Activated CD4-positive, alpha-beta memory T cell treated with anti-CD3 and anti-CD28 coated beads for 36 hours (primary cell): ENCODE measurements at regions of chr3 and their contacts with region 1.

Region 1: GRCh38 chr3:18444595-18445400 is 19.7 kb upstream of the SATB1 start:
- DNase-seq: peak; percentile 87
- H3K4me3 Mint-ChIP-seq: peak overlapping the region; percentile 99
- H3K27ac Mint-ChIP-seq: peak overlapping the region; percentile 99
- H3K4me1 Mint-ChIP-seq: peaks cover 36% of the 10 kb centered on the region
- H3K27me3 Mint-ChIP-seq: no peaks in the 10 kb centered on the region

Region 2: GRCh38 chr3:17742108-17742879 is 702.5 kb before region 1 on chr3 and contains the start of gene TBC1D5:
- CTCF ChIA-PET with region 1: no interaction called
- POLR2A ChIA-PET with region 1: no interaction called
- intact Hi-C with region 1: loop called (anchors 5 kb)
- DNase-seq: peak; percentile 96
- H3K4me3 Mint-ChIP-seq: peak within 1 kb of the TSS; percentile 94
- H3K27ac Mint-ChIP-seq: peak within 1 kb of the TSS; percentile 97
- H3K4me1 Mint-ChIP-seq: peaks cover 36% of the 10 kb centered on the region
- H3K27me3 Mint-ChIP-seq: no peaks in the 10 kb centered on the region
- total RNA-seq, gene TBC1D5: 49.2 to 53.7 TPM

Region 3: DNA sequence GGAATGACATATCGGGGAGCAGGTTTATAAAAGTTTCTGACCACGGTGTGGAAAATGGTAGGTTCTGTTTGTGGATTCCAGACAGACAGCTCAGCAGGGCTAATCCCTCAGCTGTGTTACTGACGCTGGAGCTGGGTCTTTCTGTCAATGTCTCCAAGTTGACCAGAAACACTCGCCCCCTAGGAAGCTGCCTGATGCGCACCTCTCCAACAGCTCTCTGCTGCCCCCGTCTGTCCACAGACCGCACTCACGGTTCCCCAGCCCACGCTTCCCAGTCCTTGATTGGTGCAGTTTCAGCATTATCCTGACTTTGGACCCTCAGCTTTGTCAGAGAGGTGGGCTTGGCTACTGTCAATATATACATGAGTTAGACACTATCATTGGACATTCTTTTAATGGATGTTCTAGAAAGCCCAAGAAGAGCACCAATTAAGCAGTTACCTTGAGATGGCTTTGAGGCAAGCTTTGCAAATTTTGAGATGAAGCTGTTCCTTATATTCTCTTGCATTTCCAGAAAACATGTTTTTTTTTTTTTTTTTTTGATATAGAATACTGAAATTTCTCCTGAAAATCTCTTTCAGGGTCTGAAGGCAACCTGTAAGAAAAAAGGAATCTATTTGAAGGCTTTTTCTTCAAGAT is 603.5 kb before region 1 on chr3:
- CTCF ChIA-PET with region 1: no interaction called
- POLR2A ChIA-PET with region 1: no interaction called
- intact Hi-C with region 1: no loop called
- DNase-seq: peak; percentile 82
- H3K4me3 Mint-ChIP-seq: no peak overlapping the region
- H3K27ac Mint-ChIP-seq: no peak overlapping the region
- H3K4me1 Mint-ChIP-seq: no peaks in the 10 kb centered on the region
- H3K27me3 Mint-ChIP-seq: peaks cover 4% of the 10 kb centered on the region

Region 4: DNA sequence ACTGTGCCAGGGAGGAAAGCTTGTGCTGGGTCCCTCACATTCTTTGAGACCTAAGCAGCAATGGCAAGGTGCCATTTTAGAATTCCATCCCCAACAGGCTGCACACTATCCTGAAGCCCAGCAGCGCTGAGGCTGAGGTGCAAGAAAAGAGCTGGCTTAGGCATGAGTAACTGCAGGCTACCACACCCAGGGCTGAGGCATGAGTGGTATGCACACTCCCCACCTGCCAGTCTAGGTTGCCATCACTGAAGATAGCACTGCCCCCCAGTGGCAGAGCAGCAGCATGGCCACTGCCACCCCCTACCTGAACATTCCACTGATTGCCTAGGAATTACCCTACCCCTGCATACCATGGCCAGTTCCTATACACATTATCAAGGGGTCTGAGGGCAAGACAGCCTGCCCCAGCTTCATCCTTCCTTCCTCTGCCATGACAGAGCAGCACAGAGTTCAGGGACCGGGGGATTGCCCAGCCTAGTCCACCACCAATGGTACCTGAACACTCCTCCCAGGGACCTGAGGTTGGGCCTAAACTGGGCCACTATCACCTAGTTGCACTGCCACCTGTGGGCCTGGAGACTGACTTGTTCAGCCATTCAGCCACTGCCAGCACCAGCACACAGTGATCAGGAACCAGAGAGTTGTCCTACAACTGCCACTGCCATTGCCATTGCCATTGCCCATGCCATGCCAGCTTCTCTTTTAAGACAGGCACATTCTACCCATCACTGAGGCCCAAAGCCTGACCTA is 149.5 kb before region 1 on chr3:
- CTCF ChIA-PET with region 1: no interaction called
- POLR2A ChIA-PET with region 1: no interaction called
- intact Hi-C with region 1: no loop called
- DNase-seq: peak; percentile 53
- H3K4me3 Mint-ChIP-seq: no peak overlapping the region
- H3K27ac Mint-ChIP-seq: no peak overlapping the region
- H3K4me1 Mint-ChIP-seq: no peaks in the 10 kb centered on the region
- H3K27me3 Mint-ChIP-seq: peaks cover 2% of the 10 kb centered on the region

Region 5: GRCh38 chr3:18389108-18389733 is 55.6 kb before region 1 on chr3:
- CTCF ChIA-PET with region 1: no interaction called
- POLR2A ChIA-PET with region 1: no interaction called
- intact Hi-C with region 1: loop called (anchors 2 kb)
- DNase-seq: no peak
- H3K4me3 Mint-ChIP-seq: no peak overlapping the region
- H3K27ac Mint-ChIP-seq: peak overlapping the region; percentile 28
- H3K4me1 Mint-ChIP-seq: peaks cover 57% of the 10 kb centered on the region
- H3K27me3 Mint-ChIP-seq: no peaks in the 10 kb centered on the region

Region 6: GRCh38 chr3:18424729-18425640 is 19.8 kb before region 1 on chr3 and contains the start of gene SATB1:
- CTCF ChIA-PET with region 1: no interaction called
- POLR2A ChIA-PET with region 1: interaction called, 95 read pairs
- intact Hi-C with region 1: loop called (anchors 1 kb)
- DNase-seq: peak; percentile 78
- H3K4me3 Mint-ChIP-seq: peak within 1 kb of the TSS; percentile 86
- H3K27ac Mint-ChIP-seq: peak within 1 kb of the TSS; percentile 84
- H3K4me1 Mint-ChIP-seq: peaks cover 74% of the 10 kb centered on the region
- H3K27me3 Mint-ChIP-seq: no peaks in the 10 kb centered on the region
- total RNA-seq, gene SATB1: 546 to 561 TPM

Region 7: GRCh38 chr3:18649666-18650363 is 205.0 kb after region 1 on chr3:
- CTCF ChIA-PET with region 1: interaction called, 3 read pairs
- POLR2A ChIA-PET with region 1: interaction called, 16 read pairs
- intact Hi-C with region 1: loop called (anchors 2 kb)
- DNase-seq: peak; percentile 76
- H3K4me3 Mint-ChIP-seq: peak overlapping the region; percentile 30
- H3K27ac Mint-ChIP-seq: peak overlapping the region; percentile 98
- H3K4me1 Mint-ChIP-seq: peaks cover 89% of the 10 kb centered on the region
- H3K27me3 Mint-ChIP-seq: no peaks in the 10 kb centered on the region

Region 8: DNA sequence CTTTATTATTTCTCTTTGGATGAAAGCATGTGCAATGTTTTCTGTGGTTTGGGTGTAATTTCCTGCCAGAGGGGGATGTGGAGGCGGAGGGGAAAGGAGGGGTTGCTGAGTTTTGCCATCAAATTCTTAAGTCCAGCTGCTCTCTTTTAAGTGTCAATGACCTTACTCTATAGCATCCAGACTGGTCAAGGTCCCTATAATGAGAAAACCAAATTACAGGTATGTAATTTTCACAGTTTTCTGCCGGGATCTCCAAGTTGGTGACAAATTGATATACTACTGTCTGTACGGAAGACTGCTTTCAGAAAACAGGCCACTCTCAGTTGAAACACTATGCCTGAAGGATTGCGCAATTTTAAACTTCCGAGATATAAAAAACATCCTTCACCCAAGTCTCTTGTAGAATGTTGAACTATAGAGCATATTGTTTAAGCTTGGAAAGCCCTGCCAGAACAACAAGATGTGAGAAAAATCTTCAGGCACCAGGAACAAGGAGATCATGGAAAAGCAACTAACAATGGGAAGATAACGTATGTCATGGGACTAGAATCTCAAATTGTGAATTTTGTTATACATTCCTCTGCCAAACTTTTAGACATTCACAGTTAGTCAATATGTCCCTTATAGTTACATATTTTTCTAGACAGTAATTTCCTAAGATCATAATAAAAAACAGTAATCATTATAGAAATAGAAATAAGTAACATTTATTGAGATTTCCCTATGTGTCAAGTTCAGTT is 281.0 kb after region 1 on chr3:
- CTCF ChIA-PET with region 1: no interaction called
- POLR2A ChIA-PET with region 1: interaction called, 11 read pairs
- intact Hi-C with region 1: no loop called
- DNase-seq: peak; percentile 66
- H3K4me3 Mint-ChIP-seq: peak overlapping the region; percentile 78
- H3K27ac Mint-ChIP-seq: peak overlapping the region; percentile 94
- H3K4me1 Mint-ChIP-seq: peaks cover 79% of the 10 kb centered on the region
- H3K27me3 Mint-ChIP-seq: no peaks in the 10 kb centered on the region

Region 9: DNA sequence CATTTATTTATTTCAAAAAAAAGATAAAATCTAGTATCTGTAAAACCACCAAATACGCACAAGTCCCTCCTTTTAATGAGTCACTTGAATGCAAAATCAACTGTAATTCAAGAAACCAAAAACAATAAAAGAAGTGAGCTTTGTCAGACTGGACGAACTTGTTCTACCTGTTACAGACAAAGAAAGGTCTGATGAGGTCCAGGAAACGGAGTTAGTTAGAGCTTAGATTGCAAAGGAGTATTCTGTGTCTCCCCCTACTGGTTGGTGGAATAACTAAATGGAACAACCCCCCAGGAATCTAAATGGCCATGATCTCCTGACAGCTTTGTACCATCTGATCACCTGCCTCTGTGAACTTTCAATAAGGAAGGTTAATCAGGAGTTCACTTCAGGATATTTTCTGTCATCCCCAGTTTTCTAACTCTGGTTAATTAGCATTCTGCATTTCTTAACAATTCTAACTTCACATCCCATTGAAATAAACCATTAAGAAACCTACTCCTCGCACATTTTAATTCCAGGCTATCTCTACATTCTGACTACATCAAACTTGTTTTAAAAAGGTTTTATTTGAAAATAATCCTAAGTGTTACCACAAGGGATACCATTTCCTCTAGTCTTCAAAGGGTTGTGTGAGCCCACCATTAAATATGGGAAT is 313.4 kb after region 1 on chr3:
- CTCF ChIA-PET with region 1: interaction called, 19 read pairs
- POLR2A ChIA-PET with region 1: no interaction called
- intact Hi-C with region 1: loop called (anchors 1 kb)
- DNase-seq: no peak
- H3K4me3 Mint-ChIP-seq: no peak overlapping the region
- H3K27ac Mint-ChIP-seq: peak overlapping the region; percentile 78
- H3K4me1 Mint-ChIP-seq: peaks cover 39% of the 10 kb centered on the region
- H3K27me3 Mint-ChIP-seq: no peaks in the 10 kb centered on the region